Posterior vena cava (tissue), 2 donors: ENCODE measurements at regions of chr2 and their contacts with region 1.

Region 1: GRCh38 chr2:167140767-167141166 is 252.5 kb downstream of the XIRP2 start:
- DNase-seq: no peak

Region 2: GRCh38 chr2:167181134-167181533 is 40.4 kb after region 1 on chr2:
- intact Hi-C with region 1: loop called in 1 of 2 experiments (anchors 5 kb)
- DNase-seq: no peak